ENCODE measurements at regions of chr3 and their contacts with region 1.

Region 1: DNA sequence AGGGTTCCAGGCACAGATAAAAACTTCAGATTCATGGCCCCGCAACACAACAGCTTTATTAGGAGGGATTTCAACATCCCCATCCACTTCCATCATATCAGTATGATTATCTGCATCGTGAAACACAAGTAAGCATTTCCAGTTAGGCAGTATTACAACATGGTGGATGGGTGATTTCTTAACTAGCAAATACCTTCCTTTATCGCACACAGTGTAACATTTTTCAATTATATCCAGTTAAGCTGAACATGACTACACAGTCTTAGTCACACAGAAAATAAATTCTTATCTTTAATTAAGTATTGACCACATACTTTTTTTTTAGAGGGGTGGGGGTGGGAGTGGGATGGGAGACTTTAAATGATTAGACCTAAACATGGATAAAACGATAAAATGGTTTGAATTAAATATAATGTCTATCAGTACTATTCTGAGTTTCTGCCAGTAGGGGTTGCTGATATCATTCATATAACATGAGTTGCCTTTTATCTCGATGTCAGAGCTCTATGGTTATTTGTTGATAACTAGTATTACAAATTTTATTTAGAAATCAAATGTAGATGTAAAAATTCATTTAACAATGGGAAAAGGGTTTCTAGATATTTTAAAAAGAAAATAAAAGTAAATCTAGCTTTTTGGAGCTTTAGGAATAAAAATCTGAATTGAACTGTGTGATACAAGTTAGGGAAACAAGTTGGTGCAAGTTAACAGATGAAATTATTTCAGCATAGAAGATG is 146.6 kb downstream of the TBL1XR1 start:
- DNase-seq: no peak
- ATAC-seq: peak; percentile 67 to 92 (median 87)
- H3K4me3 ChIP-seq: no peak overlapping the region
- H3K27ac ChIP-seq: no peak overlapping the region
- H3K4me1 ChIP-seq: peaks cover 0 to 4% (median 0%) of the 10 kb centered on the region in 3 donors
- H3K27me3 ChIP-seq: no peaks in the 10 kb centered on the region
- CTCF ChIP-seq: peak in 3 of 4 donors; percentile 21 to 37 (median 27)

Region 2: DNA sequence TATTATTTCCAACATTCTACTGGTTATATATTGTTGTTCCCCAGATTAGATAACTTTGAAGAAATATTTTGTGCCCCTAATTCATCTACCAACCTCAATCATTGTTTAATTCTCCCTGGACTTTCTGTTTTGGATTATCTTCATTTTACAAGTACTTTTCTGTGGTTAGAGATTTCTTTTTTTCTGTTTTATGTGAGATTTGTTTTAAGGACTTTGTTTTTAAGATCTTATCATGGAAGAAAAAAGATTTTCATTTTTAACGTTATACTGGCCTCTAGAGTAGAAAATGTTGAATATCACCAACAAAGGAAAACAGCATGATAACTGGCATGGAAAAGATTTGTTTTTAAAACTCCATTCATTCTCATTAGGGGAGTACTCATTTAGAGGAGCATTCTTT is 1274.7 kb after region 1 on chr3:
- intact Hi-C with region 1: loop called in 1 of 3 experiments (anchors 10 kb)
- DNase-seq: no peak
- ATAC-seq: peak in 3 of 4 donors; percentile 29 to 46 (median 42)
- H3K4me3 ChIP-seq: no peak overlapping the region
- H3K27ac ChIP-seq: no peak overlapping the region
- H3K4me1 ChIP-seq: peaks cover 3 to 12% (median 10%) of the 10 kb centered on the region in 3 donors
- H3K27me3 ChIP-seq: no peaks in the 10 kb centered on the region
- CTCF ChIP-seq: peak in 2 of 4 donors; percentile 5 to 18